CD4-positive, alpha-beta T cell (primary cell): ENCODE measurements at regions of chr15 and their contacts with region 1.

Region 1: GRCh38 chr15:34927726-34928125 is 41.8 kb downstream of the AQR start:
- DNase-seq: no peak
- ATAC-seq: no peak
- H3K4me3 ChIP-seq: no peak overlapping the region
- H3K4me3 Mint-ChIP-seq: no peak overlapping the region
- H3K27ac ChIP-seq: no peak overlapping the region
- H3K27ac Mint-ChIP-seq: no peak overlapping the region
- H3K4me1 ChIP-seq: no peaks in the 10 kb centered on the region
- H3K4me1 Mint-ChIP-seq: no peaks in the 10 kb centered on the region
- H3K27me3 ChIP-seq: no peaks in the 10 kb centered on the region
- H3K27me3 Mint-ChIP-seq: no peaks in the 10 kb centered on the region
- CTCF ChIP-seq: no peak

Region 2: GRCh38 chr15:34621675-34622074 is 306.1 kb before region 1 on chr15:
- CTCF ChIA-PET with region 1: no interaction called
- POLR2A ChIA-PET with region 1: no interaction called
- intact Hi-C with region 1: loop called in 1 of 2 experiments (anchors 10 kb)
- DNase-seq: peak in 2 of 14 experiments; percentile 4 to 7
- ATAC-seq: no peak
- H3K4me3 ChIP-seq: no peak overlapping the region
- H3K4me3 Mint-ChIP-seq: no peak overlapping the region
- H3K27ac ChIP-seq: no peak overlapping the region
- H3K27ac Mint-ChIP-seq: no peak overlapping the region
- H3K4me1 ChIP-seq: no peaks in the 10 kb centered on the region
- H3K4me1 Mint-ChIP-seq: no peaks in the 10 kb centered on the region
- H3K27me3 ChIP-seq: peaks cover 0 to 28% of the 10 kb centered on the region in 2 experiments
- H3K27me3 Mint-ChIP-seq: peaks cover 53% of the 10 kb centered on the region
- CTCF ChIP-seq: no peak

Region 3: GRCh38 chr15:34987985-34988873 is 60.5 kb after region 1 on chr15 and contains the start of gene ZNF770:
- CTCF ChIA-PET with region 1: no interaction called
- POLR2A ChIA-PET with region 1: no interaction called
- intact Hi-C with region 1: no loop called
- DNase-seq: peak; percentile 59 to 94 (median 80)
- ATAC-seq: peak; percentile 84
- H3K4me3 ChIP-seq: peak within 1 kb of the TSS; percentile 89
- H3K4me3 Mint-ChIP-seq: peak within 1 kb of the TSS; percentile 99
- H3K27ac ChIP-seq: peak within 1 kb of the TSS; percentile 93 to 98
- H3K27ac Mint-ChIP-seq: peak within 1 kb of the TSS; percentile 98
- H3K4me1 ChIP-seq: peaks cover 23% of the 10 kb centered on the region
- H3K4me1 Mint-ChIP-seq: peaks cover 55% of the 10 kb centered on the region
- H3K27me3 ChIP-seq: no peaks in the 10 kb centered on the region
- H3K27me3 Mint-ChIP-seq: no peaks in the 10 kb centered on the region
- CTCF ChIP-seq: no peak
- total RNA-seq, gene ZNF770: 35.4 to 37.9 TPM